ENCODE measurements at regions of chr7 and their contacts with region 1.

Region 1: DNA sequence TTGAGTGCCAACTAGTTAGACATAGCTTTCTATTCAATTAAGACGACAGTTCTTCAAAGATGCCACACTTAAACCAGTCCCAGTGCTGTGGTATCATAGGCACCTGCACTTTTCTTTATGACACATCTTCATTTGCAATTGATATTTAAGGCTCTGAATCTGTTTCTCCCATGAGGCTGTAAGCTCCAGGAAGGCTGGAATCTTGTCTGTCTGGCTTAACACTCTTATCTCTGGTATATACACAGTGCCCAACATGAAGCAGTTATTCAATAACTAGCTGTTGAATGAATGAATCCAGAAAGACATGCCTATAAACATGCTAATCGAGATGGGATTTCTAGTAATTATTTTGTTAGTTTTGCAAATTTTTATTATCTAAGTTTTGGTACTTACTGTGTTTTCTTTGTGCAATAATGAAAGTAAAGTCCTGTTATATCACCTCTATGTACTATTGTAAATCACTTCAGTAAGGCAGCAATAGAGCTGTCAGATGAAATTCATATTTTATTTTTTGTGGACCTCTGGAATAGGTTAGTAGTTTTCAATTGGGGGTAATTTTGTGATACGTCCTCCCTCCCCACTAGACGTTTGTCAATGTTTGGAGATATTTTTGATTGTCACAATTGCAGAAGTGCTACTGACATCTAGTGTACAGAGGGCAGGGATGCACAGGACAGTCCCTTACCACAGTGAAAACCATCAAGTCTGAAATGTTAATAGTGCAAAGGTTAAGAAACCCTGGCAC is 51.3 kb upstream of the STEAP4 start:
- DNase-seq: peak in 1 of 2 experiments; percentile 32
- H3K4me3 ChIP-seq: no peak overlapping the region
- H3K4me3 Mint-ChIP-seq: peak overlapping the region; percentile 15
- H3K27ac Mint-ChIP-seq: no peak overlapping the region
- H3K4me1 ChIP-seq: peaks cover 14% of the 10 kb centered on the region
- H3K4me1 Mint-ChIP-seq: peaks cover 11% of the 10 kb centered on the region
- H3K27me3 ChIP-seq: no peaks in the 10 kb centered on the region; the same call in 1 of the 2 replicates
- H3K27me3 Mint-ChIP-seq: peaks cover 5% of the 10 kb centered on the region
- CTCF ChIP-seq: peak; percentile 56 to 71

Region 2: GRCh38 chr7:88386665-88387156 is 28.8 kb after region 1 on chr7:
- CTCF ChIA-PET with region 1: interaction called, 3 read pairs
- POLR2A ChIA-PET with region 1: no interaction called
- intact Hi-C with region 1: loop called (anchors 1 kb)
- DNase-seq: no peak
- H3K4me3 ChIP-seq: no peak overlapping the region
- H3K4me3 Mint-ChIP-seq: no peak overlapping the region
- H3K27ac Mint-ChIP-seq: no peak overlapping the region
- H3K4me1 ChIP-seq: peaks cover 14% of the 10 kb centered on the region
- H3K4me1 Mint-ChIP-seq: peaks cover 21% of the 10 kb centered on the region
- H3K27me3 ChIP-seq: no peaks in the 10 kb centered on the region
- H3K27me3 Mint-ChIP-seq: peaks cover 7% of the 10 kb centered on the region
- CTCF ChIP-seq: no peak

Region 3: GRCh38 chr7:88826222-88826621 is 468.3 kb after region 1 on chr7:
- CTCF ChIA-PET with region 1: no interaction called
- POLR2A ChIA-PET with region 1: no interaction called
- intact Hi-C with region 1: no loop called
- DNase-seq: no peak
- H3K4me3 ChIP-seq: no peak overlapping the region
- H3K4me3 Mint-ChIP-seq: no peak overlapping the region
- H3K27ac Mint-ChIP-seq: no peak overlapping the region
- H3K4me1 ChIP-seq: no peaks in the 10 kb centered on the region
- H3K4me1 Mint-ChIP-seq: no peaks in the 10 kb centered on the region
- H3K27me3 ChIP-seq: no peaks in the 10 kb centered on the region
- H3K27me3 Mint-ChIP-seq: no peaks in the 10 kb centered on the region
- CTCF ChIP-seq: no peak